ENCODE measurements at regions of chr4 and their contacts with region 1.

Region 1: GRCh38 chr4:109424093-109424841 is 9.3 kb upstream of the SEC24B start:
- DNase-seq: no peak
- H3K4me3 ChIP-seq: no peak overlapping the region
- H3K27ac ChIP-seq: no peak overlapping the region
- H3K4me1 ChIP-seq: no peaks in the 10 kb centered on the region
- H3K27me3 ChIP-seq: no peaks in the 10 kb centered on the region
- CTCF ChIP-seq: no peak
- POLR2A ChIP-seq: no peak

Region 2: DNA sequence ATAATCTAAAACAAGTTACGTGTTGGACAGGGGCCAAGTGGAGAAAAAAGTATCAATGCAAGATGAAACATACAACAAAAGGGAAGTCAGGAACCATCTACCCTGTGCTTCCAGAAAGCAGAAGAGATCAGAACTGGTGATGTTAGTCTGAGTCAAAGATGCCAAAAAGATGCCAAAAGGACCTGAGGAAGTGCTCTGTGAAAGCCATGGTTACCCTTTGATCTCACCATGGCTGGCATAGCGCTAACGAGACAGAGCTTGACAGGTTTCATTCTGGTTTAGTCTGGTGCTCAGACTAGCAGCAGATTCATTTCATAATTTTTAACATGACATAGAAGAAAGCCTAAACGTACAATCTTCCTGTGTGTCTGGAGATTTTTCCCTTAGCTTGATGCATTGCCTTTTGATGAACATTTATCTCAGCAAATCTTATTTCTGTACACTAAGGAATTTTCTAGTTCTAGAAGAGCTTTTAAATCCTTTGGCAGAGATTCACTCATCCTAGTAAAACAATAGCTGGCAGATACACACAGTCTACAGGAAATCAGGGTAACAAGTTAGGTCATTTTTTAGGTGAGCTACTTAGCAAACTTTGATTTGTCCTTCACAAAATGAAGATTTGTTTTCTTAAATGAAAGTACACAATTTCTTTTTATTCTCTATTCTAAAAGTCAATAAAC is 209.5 kb before region 1 on chr4:
- intact Hi-C with region 1: no loop called
- DNase-seq: no peak
- H3K4me3 ChIP-seq: no peak overlapping the region
- H3K27ac ChIP-seq: no peak overlapping the region
- H3K4me1 ChIP-seq: peaks cover 5% of the 10 kb centered on the region
- H3K27me3 ChIP-seq: no peaks in the 10 kb centered on the region
- CTCF ChIP-seq: no peak
- POLR2A ChIP-seq: no peak

Region 3: DNA sequence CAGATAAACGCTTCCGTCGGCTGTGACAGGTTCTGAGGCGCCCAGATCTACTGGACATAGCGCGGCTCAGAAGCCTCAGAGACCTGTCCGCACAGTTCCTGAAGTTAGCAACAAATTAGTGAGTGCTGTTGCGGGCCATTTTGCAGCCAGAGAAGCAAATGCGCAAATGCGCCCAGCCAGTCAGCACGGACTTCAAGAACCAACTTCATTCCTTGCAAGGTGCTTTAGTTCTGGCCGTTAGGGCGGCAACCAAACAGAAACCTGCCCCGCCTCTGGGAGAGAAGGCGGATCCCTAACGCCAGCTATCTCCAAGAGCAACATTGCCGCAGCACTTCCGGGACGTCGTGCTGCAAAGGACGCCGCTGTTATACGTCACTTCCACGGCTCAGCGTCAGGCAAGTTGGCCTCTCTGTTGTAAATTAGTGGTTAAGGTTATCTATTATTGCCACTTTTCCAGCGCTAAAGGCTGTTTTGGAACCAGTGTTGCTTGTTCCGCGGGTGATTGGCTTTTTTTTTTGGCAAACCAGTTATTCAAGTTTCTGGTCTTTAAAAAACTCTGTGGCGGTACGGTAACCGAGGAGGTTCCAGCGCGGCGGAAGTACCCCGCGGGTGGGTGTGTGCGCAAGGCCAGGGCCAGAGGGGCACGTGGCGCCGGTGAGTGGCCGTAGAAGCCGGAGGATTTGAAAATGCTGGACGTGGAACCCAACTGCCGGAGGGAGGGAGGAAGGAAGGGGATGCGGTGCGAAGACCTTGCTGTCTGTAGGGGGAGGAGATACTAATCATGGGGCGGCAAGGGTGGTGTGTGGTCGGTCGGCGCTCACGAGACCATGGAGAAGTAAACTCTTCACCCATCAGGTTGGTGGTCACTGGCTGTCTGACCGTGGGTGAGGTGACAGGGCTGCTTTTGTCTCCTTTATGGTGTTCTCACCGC is 391.1 kb after region 1 on chr4 and contains the start of gene GAR1:
- intact Hi-C with region 1: loop called (anchors 10 kb)
- DNase-seq: peak in 1 of 2 donors; percentile 95
- H3K4me3 ChIP-seq: peak within 1 kb of the TSS; percentile 65 to 86
- H3K27ac ChIP-seq: peak within 1 kb of the TSS; percentile 86
- H3K4me1 ChIP-seq: peaks cover 22% of the 10 kb centered on the region
- H3K27me3 ChIP-seq: no peaks in the 10 kb centered on the region
- CTCF ChIP-seq: no peak
- POLR2A ChIP-seq: peak in 1 of 2 donors; percentile 3
- total RNA-seq, gene GAR1: 6.4 TPM

Region 4: GRCh38 chr4:109977854-109978501 is 553.7 kb after region 1 on chr4:
- intact Hi-C with region 1: loop called (anchors 5 kb)
- DNase-seq: no peak
- H3K4me3 ChIP-seq: no peak overlapping the region
- H3K27ac ChIP-seq: no peak overlapping the region
- H3K4me1 ChIP-seq: no peaks in the 10 kb centered on the region
- H3K27me3 ChIP-seq: no peaks in the 10 kb centered on the region
- CTCF ChIP-seq: peak in 2 of 3 experiments; percentile 21 to 48
- POLR2A ChIP-seq: no peak

Measured in vagina (tissue), 2 donors.